Endothelial cell of umbilical vein (primary cell): ENCODE measurements at regions of chr11 and their contacts with region 1.

Region 1: DNA sequence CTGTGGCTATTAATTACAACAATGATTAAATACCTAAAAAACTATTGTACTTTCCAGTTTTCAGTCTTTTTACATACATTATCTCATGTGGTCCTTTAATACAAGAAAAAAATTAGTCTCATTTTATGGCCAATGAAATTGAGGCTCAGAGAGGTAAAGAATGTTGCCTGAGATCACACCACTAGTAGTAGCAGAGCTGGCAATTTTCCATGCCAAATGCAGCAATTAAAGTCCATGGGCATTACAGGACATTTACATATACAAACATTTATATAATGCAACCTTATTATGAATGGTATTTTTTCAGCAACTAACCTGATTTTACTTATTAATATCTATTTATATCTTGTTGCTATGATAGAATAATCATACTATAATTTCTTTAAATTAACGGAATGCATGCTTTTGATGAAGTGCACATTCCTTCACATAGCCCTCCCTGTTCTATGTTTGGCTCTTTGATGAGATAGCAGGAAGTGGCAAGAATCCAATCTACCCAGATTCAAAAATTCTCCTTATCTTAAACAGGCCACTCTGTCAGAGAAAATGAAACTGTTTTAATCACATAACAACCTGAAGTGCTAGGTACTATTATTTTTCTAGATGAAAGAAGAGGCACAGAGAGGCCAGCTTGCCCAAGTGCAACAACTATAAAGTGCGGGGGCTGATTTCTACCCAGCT is 120.9 kb upstream of the LDLRAD3 start:
- DNase-seq: no peak
- H3K4me3 ChIP-seq: no peak overlapping the region
- H3K27ac ChIP-seq: no peak overlapping the region
- H3K4me1 ChIP-seq: peaks cover 8% of the 10 kb centered on the region
- H3K27me3 ChIP-seq: no peaks in the 10 kb centered on the region
- CTCF ChIP-seq: no peak
- POLR2A ChIP-seq: no peak

Region 2: GRCh38 chr11:35257281-35257680 is 565.7 kb before region 1 on chr11:
- CTCF ChIA-PET with region 1: no interaction called
- POLR2A ChIA-PET with region 1: no interaction called
- dilution Hi-C with region 1: no loop called
- intact Hi-C with region 1: no loop called
- DNase-seq: no peak
- H3K4me3 ChIP-seq: no peak overlapping the region
- H3K27ac ChIP-seq: no peak overlapping the region
- H3K4me1 ChIP-seq: no peaks in the 10 kb centered on the region
- H3K27me3 ChIP-seq: peaks cover 3 to 45% of the 10 kb centered on the region in 2 experiments
- CTCF ChIP-seq: no peak
- POLR2A ChIP-seq: no peak

Region 3: GRCh38 chr11:35605711-35606110 is 217.2 kb before region 1 on chr11:
- CTCF ChIA-PET with region 1: interaction called, 69 read pairs
- POLR2A ChIA-PET with region 1: no interaction called
- dilution Hi-C with region 1: no loop called
- intact Hi-C with region 1: no loop called
- DNase-seq: no peak
- H3K4me3 ChIP-seq: no peak overlapping the region
- H3K27ac ChIP-seq: no peak overlapping the region
- H3K4me1 ChIP-seq: no peaks in the 10 kb centered on the region
- H3K27me3 ChIP-seq: peaks cover 26 to 46% of the 10 kb centered on the region in 2 experiments
- CTCF ChIP-seq: no peak
- POLR2A ChIP-seq: no peak

Region 4: DNA sequence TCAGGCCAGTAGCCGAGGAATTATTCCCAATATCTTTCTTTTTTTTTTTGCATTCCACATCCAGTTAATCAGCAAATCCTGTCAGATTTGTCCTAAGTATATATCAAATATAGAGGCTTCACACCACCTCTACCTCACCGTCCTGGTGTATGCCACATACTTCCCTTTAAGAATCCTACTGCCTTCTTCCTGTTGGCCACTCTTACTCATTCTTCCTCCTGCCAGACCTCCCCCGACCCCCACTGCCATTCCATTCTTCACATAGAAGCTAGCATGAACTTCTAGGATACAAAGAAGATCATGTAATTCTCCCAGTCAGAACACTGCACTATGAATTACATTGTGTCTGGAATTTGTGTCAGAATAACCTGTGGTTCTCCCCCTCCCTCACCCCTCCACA is 70.8 kb before region 1 on chr11:
- CTCF ChIA-PET with region 1: interaction called, 17 read pairs
- POLR2A ChIA-PET with region 1: no interaction called
- dilution Hi-C with region 1: no loop called
- intact Hi-C with region 1: no loop called
- DNase-seq: peak; percentile 53
- H3K4me3 ChIP-seq: no peak overlapping the region
- H3K27ac ChIP-seq: peak overlapping the region; percentile 42
- H3K4me1 ChIP-seq: peaks cover 22% of the 10 kb centered on the region
- H3K27me3 ChIP-seq: no peaks in the 10 kb centered on the region
- CTCF ChIP-seq: no peak
- POLR2A ChIP-seq: peak; percentile 29

Region 5: GRCh38 chr11:35873721-35874120 is 50.8 kb after region 1 on chr11:
- CTCF ChIA-PET with region 1: interaction called, 25 read pairs
- POLR2A ChIA-PET with region 1: no interaction called
- dilution Hi-C with region 1: no loop called
- intact Hi-C with region 1: no loop called
- DNase-seq: no peak
- H3K4me3 ChIP-seq: no peak overlapping the region
- H3K27ac ChIP-seq: no peak overlapping the region
- H3K4me1 ChIP-seq: no peaks in the 10 kb centered on the region
- H3K27me3 ChIP-seq: peaks cover 9 to 11% of the 10 kb centered on the region in 2 experiments
- CTCF ChIP-seq: no peak
- POLR2A ChIP-seq: no peak

Region 6: GRCh38 chr11:35990170-35990569 is 167.2 kb after region 1 on chr11:
- CTCF ChIA-PET with region 1: interaction called, 12 read pairs
- POLR2A ChIA-PET with region 1: no interaction called
- dilution Hi-C with region 1: no loop called
- intact Hi-C with region 1: no loop called
- DNase-seq: no peak
- H3K4me3 ChIP-seq: no peak overlapping the region
- H3K27ac ChIP-seq: no peak overlapping the region
- H3K4me1 ChIP-seq: no peaks in the 10 kb centered on the region
- H3K27me3 ChIP-seq: no peaks in the 10 kb centered on the region
- CTCF ChIP-seq: no peak
- POLR2A ChIP-seq: no peak

Region 7: DNA sequence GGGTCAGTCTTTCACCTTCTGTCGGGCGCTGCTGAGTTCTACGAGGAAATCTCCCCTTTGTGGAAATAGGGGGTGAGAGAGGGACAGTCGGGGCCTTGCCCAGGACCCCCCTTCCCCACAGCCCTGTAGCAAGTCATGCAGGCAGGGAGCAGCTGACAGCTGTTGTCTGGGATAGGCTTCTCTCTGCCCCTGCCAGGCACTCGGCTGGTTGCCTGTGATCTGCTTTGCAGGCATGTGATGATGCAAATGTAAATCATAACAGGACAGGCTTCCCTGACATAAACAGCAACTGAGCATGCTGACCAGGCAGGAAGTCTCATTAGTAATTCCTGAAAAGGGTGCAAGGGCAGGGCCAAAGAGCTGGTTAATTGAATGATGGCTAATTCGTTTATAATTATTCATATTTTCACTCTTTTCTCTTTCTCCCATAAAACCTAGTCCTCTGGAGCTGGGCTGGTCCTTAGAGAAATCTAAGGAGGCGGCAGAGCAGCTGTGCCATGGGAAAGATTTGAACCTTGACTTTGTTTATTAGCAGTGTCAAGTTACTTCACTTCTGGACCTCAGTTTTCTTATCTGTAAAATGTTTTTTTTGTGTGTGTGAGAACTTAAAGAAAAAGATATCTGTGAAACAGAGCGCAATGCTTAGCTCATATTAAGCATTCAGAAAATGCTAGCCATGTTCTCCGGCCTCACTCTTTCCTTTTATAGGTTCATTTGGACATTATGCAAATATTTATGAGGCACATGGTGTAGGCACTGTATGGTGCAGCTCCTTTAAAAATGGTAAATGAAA is 250.7 kb after region 1 on chr11:
- CTCF ChIA-PET with region 1: interaction called, 38 read pairs
- POLR2A ChIA-PET with region 1: no interaction called
- dilution Hi-C with region 1: no loop called
- intact Hi-C with region 1: loop called (anchors 1 kb)
- DNase-seq: peak; percentile 90
- H3K4me3 ChIP-seq: no peak overlapping the region
- H3K27ac ChIP-seq: peak overlapping the region; percentile 62
- H3K4me1 ChIP-seq: peaks cover 32% of the 10 kb centered on the region
- H3K27me3 ChIP-seq: no peaks in the 10 kb centered on the region
- CTCF ChIP-seq: no peak
- POLR2A ChIP-seq: no peak

Region 8: DNA sequence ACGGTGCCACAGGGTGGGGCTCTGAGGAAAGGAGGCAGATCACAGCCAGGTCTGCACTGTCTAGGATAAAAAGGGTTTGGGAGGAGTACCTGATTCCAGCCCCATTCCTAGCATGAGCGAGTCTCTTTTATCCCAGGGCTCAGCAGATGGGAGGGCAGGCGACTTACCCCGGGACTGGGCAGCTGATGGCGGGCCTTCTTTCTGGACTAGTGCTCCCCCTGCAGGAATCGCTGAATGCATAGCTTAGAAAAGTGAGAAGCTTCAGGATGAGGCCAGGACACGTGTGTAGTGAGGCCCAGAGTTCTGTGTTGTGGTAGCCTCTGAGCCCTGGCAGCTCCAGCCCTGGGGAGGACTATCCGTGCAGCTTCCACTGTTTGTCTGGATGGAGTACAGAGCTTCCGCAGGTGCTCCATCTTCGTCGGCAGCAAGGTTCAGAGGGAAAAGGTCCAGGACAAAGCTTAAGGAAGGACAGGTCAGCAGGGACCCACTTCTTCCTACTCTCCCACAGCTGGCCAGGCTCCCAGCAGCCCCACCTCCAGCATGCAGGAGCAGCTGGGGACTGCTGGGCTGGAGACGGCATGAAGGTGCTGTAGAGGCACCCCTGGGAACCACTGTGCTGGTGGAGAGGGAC is 435.9 kb after region 1 on chr11:
- CTCF ChIA-PET with region 1: interaction called, 266 read pairs
- POLR2A ChIA-PET with region 1: interaction called, 4 read pairs
- dilution Hi-C with region 1: loop called (anchors 25 kb)
- intact Hi-C with region 1: loop called (anchors 1 kb)
- DNase-seq: peak; percentile 69
- H3K4me3 ChIP-seq: no peak overlapping the region
- H3K27ac ChIP-seq: no peak overlapping the region
- H3K4me1 ChIP-seq: no peaks in the 10 kb centered on the region
- H3K27me3 ChIP-seq: peaks cover 0 to 2% of the 10 kb centered on the region in 2 experiments
- CTCF ChIP-seq: peak; percentile 80 to 86
- POLR2A ChIP-seq: no peak